ENCODE measurements at regions of chr17 and their contacts with region 1.

Region 1: DNA sequence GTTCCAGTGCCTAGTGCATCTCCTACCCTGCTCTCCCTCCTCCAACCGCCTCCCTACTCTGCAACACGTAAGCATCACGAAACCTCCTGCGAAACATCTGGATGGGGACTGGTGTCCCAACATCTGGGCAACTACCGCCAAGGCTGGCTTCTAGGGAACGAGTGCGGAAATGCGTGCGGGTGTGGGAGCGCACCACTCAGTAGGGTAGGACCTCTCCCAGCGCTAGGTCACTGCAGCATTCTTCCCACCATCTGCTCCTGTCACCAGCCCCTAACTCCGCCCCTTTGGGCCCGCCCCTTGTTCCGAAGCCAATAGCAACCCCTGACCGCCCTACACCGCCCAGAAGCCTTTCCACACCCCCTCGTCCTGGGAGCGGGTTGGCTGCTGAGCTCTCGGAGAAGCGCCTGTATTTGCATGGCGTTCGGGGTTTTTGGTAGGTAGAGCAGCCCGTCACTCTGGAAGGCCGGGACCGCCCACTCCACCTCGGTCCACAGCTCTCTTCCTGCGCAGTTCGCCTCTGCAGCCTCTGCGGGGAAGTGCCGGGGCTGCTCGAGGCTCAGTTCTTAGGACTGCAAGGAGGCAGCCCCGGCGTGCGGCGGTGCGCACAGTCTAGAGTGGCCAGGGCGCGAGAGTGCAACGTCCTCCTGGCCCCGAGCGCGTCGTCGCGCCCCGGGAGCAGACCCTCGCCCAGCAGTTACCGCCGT is at the start of gene HS3ST3B1:
- DNase-seq: peak; percentile 95
- H3K4me3 ChIP-seq: peak within 1 kb of the TSS; percentile 55 to 63
- H3K27ac ChIP-seq: peak within 1 kb of the TSS; percentile 73 to 77
- H3K4me1 ChIP-seq: no peaks in the 10 kb centered on the region
- H3K27me3 ChIP-seq: peaks cover 15% of the 10 kb centered on the region
- CTCF ChIP-seq: peak in 2 of 4 experiments; percentile 33 to 45
- POLR2A ChIP-seq: peak; percentile 53
- total RNA-seq, gene HS3ST3B1: 2.8 to 4.1 TPM

Region 2: GRCh38 chr17:13031718-13032350 is 1268.9 kb before region 1 on chr17:
- intact Hi-C with region 1: loop called (anchors 5 kb)
- DNase-seq: no peak
- H3K4me3 ChIP-seq: no peak overlapping the region
- H3K27ac ChIP-seq: no peak overlapping the region
- H3K4me1 ChIP-seq: no peaks in the 10 kb centered on the region
- H3K27me3 ChIP-seq: no peaks in the 10 kb centered on the region
- CTCF ChIP-seq: peak; percentile 35 to 60 (median 48)
- POLR2A ChIP-seq: no peak

Region 3: DNA sequence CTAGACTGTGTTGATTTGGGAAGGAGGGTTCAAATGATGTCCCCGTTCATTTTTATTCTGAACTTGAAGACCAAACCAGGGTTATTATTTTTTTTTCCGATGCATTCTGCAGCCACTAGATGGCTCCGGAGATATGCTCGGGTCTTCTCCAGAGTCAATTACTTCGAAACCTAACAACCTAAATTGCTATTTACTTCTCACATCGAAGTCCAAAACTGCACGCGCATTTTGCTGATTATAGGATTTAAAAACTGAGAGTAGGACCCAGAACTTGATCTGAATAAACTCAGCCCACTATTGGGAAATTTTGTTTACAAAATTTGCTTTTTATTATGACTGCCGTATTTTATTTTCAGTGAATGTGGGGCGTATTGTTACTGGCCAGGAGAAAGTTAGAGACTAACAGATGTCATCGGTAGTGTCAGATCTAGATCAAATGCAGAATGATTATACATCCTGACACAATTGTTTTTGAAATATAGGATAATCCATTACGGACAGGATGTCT is 962.8 kb before region 1 on chr17:
- intact Hi-C with region 1: loop called (anchors 2 kb)
- DNase-seq: peak; percentile 6
- H3K4me3 ChIP-seq: no peak overlapping the region
- H3K27ac ChIP-seq: no peak overlapping the region
- H3K4me1 ChIP-seq: no peaks in the 10 kb centered on the region
- H3K27me3 ChIP-seq: no peaks in the 10 kb centered on the region
- CTCF ChIP-seq: peak in 3 of 4 experiments; percentile 44 to 65 (median 55)
- POLR2A ChIP-seq: no peak

Region 4: GRCh38 chr17:13490906-13491482 is 809.7 kb before region 1 on chr17:
- intact Hi-C with region 1: no loop called
- DNase-seq: no peak
- H3K4me3 ChIP-seq: no peak overlapping the region
- H3K27ac ChIP-seq: no peak overlapping the region
- H3K4me1 ChIP-seq: no peaks in the 10 kb centered on the region
- H3K27me3 ChIP-seq: no peaks in the 10 kb centered on the region
- CTCF ChIP-seq: no peak
- POLR2A ChIP-seq: no peak

Region 5: DNA sequence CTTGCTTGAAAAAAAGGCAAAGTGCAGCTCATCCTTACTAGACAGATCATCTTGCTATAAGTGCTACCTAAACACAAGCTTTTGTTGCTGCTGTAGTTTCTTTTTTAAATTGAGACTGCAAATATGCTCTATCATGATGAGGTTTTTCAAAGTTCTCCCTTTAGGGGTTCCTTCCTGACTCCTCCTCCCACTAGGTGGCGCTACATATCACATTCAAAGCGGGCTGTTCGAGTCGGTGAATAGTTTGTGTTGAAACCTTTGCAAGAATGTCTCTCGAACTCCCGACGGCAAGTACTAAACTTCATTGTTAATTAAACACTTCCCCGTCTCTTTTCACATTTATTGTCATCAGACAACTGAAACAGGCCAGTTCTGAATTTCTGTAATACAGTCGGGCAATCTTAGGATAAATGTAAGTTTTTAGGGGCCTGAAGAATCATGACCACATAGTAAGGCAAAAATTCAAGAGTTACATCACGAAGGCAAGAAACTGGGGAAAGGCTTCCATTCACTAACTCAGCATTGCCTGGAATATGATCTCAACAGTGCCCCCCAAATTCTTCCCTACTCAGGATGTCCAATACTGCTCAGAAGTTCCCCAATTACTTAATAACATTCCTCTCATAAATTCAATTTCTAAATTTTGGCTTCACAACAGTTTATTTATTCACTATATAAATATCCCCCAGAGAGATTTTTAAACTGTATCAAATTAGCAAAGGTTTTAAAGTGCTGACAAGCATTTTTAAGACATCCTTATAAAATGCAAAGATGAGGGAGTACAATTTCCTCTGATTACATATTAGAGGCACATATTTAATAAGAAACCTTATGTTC is 705.7 kb before region 1 on chr17:
- intact Hi-C with region 1: loop called (anchors 2 kb)
- DNase-seq: peak; percentile 75
- H3K4me3 ChIP-seq: no peak overlapping the region
- H3K27ac ChIP-seq: no peak overlapping the region
- H3K4me1 ChIP-seq: no peaks in the 10 kb centered on the region
- H3K27me3 ChIP-seq: no peaks in the 10 kb centered on the region
- CTCF ChIP-seq: peak; percentile 66 to 86 (median 72)
- POLR2A ChIP-seq: no peak

Region 6: DNA sequence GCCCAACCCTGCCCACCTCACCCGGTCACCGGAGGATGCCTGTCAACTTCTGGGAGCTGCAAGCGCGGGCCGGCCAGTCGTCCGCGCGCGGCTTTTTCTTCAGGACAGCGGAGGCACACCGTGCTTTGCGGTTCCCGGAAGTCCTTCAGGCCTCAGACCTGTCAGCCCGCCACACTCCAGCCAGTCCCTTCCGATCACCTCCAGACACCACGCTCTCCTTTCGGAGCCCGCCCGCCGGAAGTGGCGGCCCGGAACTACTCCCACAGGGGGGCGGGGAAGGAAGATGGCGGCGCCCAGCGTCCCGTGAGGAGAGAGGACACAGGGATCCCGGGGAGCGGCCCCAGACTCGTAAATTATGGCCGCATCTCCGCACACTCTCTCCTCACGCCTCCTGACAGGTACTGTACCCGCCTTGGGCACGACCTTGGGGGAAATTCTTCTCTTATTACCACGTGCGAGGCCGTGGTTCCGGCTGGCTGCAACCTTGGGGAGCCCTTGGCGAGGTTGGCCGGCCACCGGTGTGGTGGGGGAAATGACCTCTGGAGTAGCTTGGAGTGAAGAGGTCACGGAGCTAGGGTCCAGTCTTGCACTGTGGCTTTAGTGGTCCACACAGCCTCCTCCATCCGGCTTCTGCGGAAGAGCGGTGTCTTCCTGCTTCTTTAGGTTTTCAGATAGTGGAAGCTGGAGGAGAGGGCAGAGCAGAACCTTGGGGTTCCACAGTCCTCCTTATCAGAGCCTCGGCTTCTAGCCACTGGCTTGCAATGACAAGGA is 231.3 kb before region 1 on chr17 and contains the start of gene COX10:
- intact Hi-C with region 1: loop called (anchors 5 kb)
- DNase-seq: peak; percentile 86
- H3K4me3 ChIP-seq: peak within 1 kb of the TSS; percentile 66 to 77
- H3K27ac ChIP-seq: peak within 1 kb of the TSS; percentile 63 to 70
- H3K4me1 ChIP-seq: peaks cover 7% of the 10 kb centered on the region
- H3K27me3 ChIP-seq: no peaks in the 10 kb centered on the region
- CTCF ChIP-seq: no peak
- POLR2A ChIP-seq: peak; percentile 58
- total RNA-seq, gene COX10: 16.5 to 35.1 TPM

Region 7: DNA sequence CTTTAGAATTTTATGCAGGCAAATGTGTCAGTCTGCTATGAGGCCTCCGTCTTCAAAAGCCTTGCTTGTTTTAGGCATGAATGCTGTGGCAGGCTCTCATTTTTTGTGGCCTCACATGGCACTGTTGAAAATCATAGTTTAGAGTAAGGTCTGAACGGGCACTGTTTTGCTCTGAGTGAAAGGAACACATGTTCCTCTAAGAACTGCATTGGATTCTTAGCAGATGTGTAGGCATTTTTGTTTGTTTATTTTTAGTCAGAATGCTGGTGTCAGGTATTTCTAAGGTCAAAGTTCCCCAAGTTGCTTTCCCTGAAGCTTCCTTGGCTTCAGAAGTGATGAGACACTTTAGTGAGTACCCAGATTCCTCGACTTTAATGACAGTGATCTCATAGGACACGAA is 173.9 kb after region 1 on chr17:
- intact Hi-C with region 1: no loop called
- DNase-seq: no peak
- H3K4me3 ChIP-seq: no peak overlapping the region
- H3K27ac ChIP-seq: no peak overlapping the region
- H3K4me1 ChIP-seq: no peaks in the 10 kb centered on the region
- H3K27me3 ChIP-seq: no peaks in the 10 kb centered on the region
- CTCF ChIP-seq: no peak
- POLR2A ChIP-seq: no peak

Region 8: DNA sequence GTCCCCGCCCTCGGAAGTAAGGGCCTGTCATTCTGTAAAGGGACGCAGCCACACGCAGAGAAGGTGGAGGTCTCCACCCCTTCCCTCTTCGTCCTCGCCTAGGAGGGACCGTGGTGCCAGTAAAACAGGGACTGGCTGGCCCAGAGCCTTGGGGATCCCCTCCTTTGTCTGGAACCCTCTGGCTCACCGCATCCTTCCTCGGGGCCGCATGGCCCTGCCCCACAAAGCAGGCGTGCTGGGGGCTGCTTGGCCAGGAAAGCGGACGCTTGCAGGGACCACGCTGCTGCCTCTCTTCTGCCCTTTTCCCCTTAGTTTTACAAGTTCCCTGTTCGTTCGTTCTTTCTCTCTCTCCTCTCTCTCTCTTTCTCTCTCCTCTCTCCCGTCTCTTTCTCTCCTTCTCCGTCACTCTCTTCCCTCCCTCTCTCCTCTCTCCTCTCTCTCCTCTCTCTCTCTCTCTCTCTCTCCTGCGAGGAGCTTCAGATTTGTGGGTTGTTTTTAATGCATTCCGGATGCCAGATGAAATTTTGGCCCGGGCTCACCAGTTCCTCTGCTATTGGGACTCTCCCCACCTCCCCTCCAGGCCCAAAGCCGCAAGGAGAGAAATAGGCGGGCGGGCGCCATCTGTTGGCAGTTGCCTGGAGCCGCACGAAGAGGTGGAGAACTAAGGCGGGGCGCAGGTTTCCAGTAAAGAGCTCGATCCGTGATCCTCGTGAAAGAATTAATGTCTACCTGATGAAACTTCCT is 1201.8 kb after region 1 on chr17:
- intact Hi-C with region 1: loop called (anchors 10 kb)
- DNase-seq: peak; percentile 84
- H3K4me3 ChIP-seq: peak overlapping the region in 1 of 2 donors; percentile 2
- H3K27ac ChIP-seq: peak overlapping the region; percentile 28 to 47
- H3K4me1 ChIP-seq: no peaks in the 10 kb centered on the region
- H3K27me3 ChIP-seq: no peaks in the 10 kb centered on the region
- CTCF ChIP-seq: peak; percentile 63 to 87 (median 76)
- POLR2A ChIP-seq: peak; percentile 6